HCT116 (cell line): ENCODE measurements at regions of chr7 and their contacts with region 1.

Region 1: DNA sequence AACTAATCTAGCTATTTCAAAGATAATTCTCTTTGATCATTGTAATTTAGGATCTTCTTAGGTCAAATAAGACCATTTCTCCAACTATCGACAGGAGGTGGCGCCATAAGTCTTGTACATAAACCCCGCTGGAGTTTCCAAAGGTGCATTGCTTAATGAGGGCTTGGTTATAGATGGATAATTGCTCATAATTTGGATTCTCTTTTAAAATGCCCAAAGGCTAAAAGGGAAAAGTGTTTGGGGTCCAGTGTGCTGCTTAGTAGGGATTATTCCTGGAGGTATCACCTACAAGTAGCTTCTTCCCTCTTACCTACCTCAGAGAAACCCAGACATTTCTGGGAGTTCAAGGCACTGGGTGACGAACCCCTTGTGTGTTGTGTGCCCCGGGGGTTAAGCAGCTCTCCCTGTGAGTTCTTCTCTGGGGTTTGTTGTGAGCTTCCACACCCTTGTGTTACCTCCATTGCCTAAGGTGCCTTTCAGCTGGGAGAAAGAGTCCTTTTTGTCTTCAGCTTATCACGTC is 75.2 kb downstream of the PAXIP1 start:
- DNase-seq: peak; percentile 87
- ATAC-seq: peak; percentile 66
- H3K4me3 ChIP-seq: peak overlapping the region; percentile 62 to 63
- H3K27ac ChIP-seq: no peak overlapping the region
- H3K4me1 ChIP-seq: peaks cover 4 to 15% of the 10 kb centered on the region in 2 experiments; a peak in 2 of 4 replicates
- H3K27me3 ChIP-seq: 0 out of 2 replicates have a peak, but pooled peaks cover 4% of the 10 kb centered on the region
- CTCF ChIP-seq: peak; percentile 57 to 87 (median 81)
- POLR2A ChIP-seq: no peak
- RAD21 ChIP-seq: peak; percentile 91

Region 2: GRCh38 chr7:154913638-154914312 is 13.9 kb before region 1 on chr7:
- CTCF ChIA-PET with region 1: interaction called, 18 read pairs
- POLR2A ChIA-PET with region 1: no interaction called
- RAD21 ChIA-PET with region 1: no interaction called
- intact Hi-C with region 1: no loop called
- DNase-seq: peak; percentile 53
- ATAC-seq: peak; percentile 99
- H3K4me3 ChIP-seq: no peak overlapping the region
- H3K27ac ChIP-seq: no peak overlapping the region
- H3K4me1 ChIP-seq: no peaks in the 10 kb centered on the region
- H3K27me3 ChIP-seq: 0 out of 2 replicates have a peak, but pooled peaks cover 3% of the 10 kb centered on the region
- CTCF ChIP-seq: peak; percentile 71 to 86 (median 84)
- POLR2A ChIP-seq: no peak
- RAD21 ChIP-seq: peak; percentile 89

Region 3: DNA sequence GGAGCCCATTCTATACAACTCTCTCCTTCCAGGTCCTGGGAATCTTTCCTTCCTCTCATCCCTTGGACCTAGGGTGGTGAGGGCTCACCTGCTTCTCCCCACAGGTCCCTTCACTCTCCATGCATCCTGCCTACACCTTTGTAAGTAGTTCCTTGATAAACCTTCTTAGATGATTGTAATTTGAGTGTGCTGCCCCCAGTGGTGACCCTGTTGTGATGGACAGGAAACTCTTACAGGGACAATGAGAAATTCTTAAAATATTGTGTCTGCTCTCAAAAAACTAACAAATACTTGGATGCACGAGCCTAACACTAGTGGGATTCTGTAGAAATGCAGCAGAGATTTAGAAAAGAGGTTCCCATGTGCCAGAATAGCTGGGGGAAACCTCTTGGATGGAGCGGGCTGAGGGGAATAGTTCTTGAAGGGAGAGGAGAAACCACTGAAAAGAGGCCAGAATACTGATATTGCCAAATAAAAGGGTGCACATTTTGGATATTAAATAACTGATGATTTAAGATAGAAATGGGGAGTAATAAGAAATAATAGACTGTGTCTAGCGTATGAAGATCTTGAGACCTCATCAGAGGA is 82.0 kb after region 1 on chr7:
- CTCF ChIA-PET with region 1: interaction called, 5 read pairs
- POLR2A ChIA-PET with region 1: no interaction called
- RAD21 ChIA-PET with region 1: no interaction called
- intact Hi-C with region 1: loop called (anchors 2 kb)
- DNase-seq: peak; percentile 27
- ATAC-seq: peak; percentile 77
- H3K4me3 ChIP-seq: no peak overlapping the region
- H3K27ac ChIP-seq: no peak overlapping the region
- H3K4me1 ChIP-seq: peaks cover 3 to 8% of the 10 kb centered on the region in 2 experiments; a peak in 2 of 4 replicates
- H3K27me3 ChIP-seq: no peaks in the 10 kb centered on the region
- CTCF ChIP-seq: peak; percentile 32 to 77 (median 70); a peak in 5 of 6 replicates
- POLR2A ChIP-seq: no peak
- RAD21 ChIP-seq: no peak

Region 4: GRCh38 chr7:155344600-155345433 is 417.1 kb after region 1 on chr7:
- CTCF ChIA-PET with region 1: interaction called, 15 read pairs
- POLR2A ChIA-PET with region 1: no interaction called
- RAD21 ChIA-PET with region 1: interaction called in 1 of 2 experiments, 3 read pairs
- intact Hi-C with region 1: loop called (anchors 1 kb)
- DNase-seq: peak; percentile 61
- ATAC-seq: peak; percentile 95
- H3K4me3 ChIP-seq: peak overlapping the region in 1 of 2 experiments; percentile 44; a peak in 3 of 4 replicates
- H3K27ac ChIP-seq: peak overlapping the region; percentile 52; the same call in 1 of the 2 replicates
- H3K4me1 ChIP-seq: peaks cover 8 to 10% of the 10 kb centered on the region in 2 experiments; a peak in 3 of 4 replicates
- H3K27me3 ChIP-seq: no peaks in the 10 kb centered on the region
- CTCF ChIP-seq: peak; percentile 72 to 84 (median 74)
- POLR2A ChIP-seq: no peak
- RAD21 ChIP-seq: peak; percentile 91

Region 5: GRCh38 chr7:155392726-155393570 is 465.3 kb after region 1 on chr7:
- CTCF ChIA-PET with region 1: no interaction called
- POLR2A ChIA-PET with region 1: no interaction called
- RAD21 ChIA-PET with region 1: no interaction called
- intact Hi-C with region 1: no loop called
- DNase-seq: peak; percentile 38
- ATAC-seq: peak; percentile 86
- H3K4me3 ChIP-seq: no peak overlapping the region
- H3K27ac ChIP-seq: no peak overlapping the region
- H3K4me1 ChIP-seq: peaks cover 0 to 8% of the 10 kb centered on the region in 2 experiments; a peak in 2 of 4 replicates
- H3K27me3 ChIP-seq: no peaks in the 10 kb centered on the region
- CTCF ChIP-seq: no peak
- POLR2A ChIP-seq: no peak
- RAD21 ChIP-seq: no peak

Region 6: DNA sequence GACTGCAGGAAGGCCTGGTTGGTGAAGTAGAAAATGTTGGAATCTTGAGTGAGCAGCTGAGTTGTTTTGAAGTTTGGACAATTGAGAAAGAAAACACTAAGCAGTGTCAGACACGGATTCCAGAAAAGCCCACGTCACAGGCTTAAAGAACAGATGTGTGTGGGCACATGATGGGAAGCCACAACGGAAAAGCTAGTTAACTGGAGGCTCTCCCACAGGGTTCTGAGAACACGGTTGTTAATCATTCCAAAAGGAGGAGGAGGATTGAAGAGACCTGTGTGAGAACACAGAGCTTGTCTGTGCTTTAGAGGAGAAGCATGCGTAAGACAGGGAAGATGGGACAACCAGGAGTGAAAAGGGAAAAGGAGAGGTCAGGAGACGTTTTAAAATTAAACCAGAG is 842.0 kb after region 1 on chr7:
- CTCF ChIA-PET with region 1: interaction called, 6 read pairs
- POLR2A ChIA-PET with region 1: no interaction called
- RAD21 ChIA-PET with region 1: no interaction called
- intact Hi-C with region 1: loop called (anchors 2 kb)
- DNase-seq: no peak
- ATAC-seq: no peak
- H3K4me3 ChIP-seq: no peak overlapping the region
- H3K27ac ChIP-seq: no peak overlapping the region
- H3K4me1 ChIP-seq: no peaks in the 10 kb centered on the region
- H3K27me3 ChIP-seq: no peaks in the 10 kb centered on the region
- CTCF ChIP-seq: no peak
- POLR2A ChIP-seq: no peak
- RAD21 ChIP-seq: no peak